B cell (primary cell): ENCODE measurements at regions of chr15 and their contacts with region 1.

Region 1: GRCh38 chr15:40754883-40755811 is at the start of gene RMDN3:
- DNase-seq: peak; percentile 96
- ATAC-seq: peak; percentile 98
- H3K4me3 ChIP-seq: peak within 1 kb of the TSS; percentile 66 to 100 (median 94)
- H3K4me3 Mint-ChIP-seq: peak within 1 kb of the TSS; percentile 93
- H3K27ac ChIP-seq: peak within 1 kb of the TSS; percentile 73 to 89
- H3K27ac Mint-ChIP-seq: peak within 1 kb of the TSS; percentile 93
- H3K4me1 ChIP-seq: peaks cover 8 to 19% of the 10 kb centered on the region in 2 donors
- H3K4me1 Mint-ChIP-seq: peaks cover 23% of the 10 kb centered on the region
- H3K27me3 ChIP-seq: no peaks in the 10 kb centered on the region
- H3K27me3 Mint-ChIP-seq: no peaks in the 10 kb centered on the region
- CTCF ChIP-seq: no peak
- total RNA-seq, gene RMDN3: 22.1 and 24.2 TPM in 2 replicates

Region 2: DNA sequence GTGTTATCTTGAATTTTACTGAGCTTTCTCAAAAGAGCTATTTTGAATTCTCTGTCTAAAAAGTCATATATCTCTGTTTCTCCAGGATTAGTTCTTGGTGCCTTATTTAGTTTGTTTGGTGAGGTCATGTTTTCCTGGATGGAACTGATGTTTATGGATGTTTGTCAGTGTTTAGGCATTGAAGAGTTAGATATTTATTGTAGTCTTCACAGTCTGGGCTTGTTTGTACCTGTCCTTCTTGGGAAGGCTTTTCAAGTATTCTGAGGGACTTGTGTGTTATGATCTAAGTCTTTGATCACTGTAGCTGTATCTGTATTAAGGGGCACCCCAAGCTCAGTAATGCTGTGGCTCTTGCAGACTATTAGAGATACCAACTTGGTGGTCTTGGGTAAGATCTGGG is 70.8 kb before region 1 on chr15:
- CTCF ChIA-PET with region 1: no interaction called
- POLR2A ChIA-PET with region 1: no interaction called
- intact Hi-C with region 1: loop called (anchors 1 kb)
- DNase-seq: no peak
- ATAC-seq: no peak
- H3K4me3 ChIP-seq: no peak overlapping the region
- H3K4me3 Mint-ChIP-seq: no peak overlapping the region
- H3K27ac ChIP-seq: no peak overlapping the region
- H3K27ac Mint-ChIP-seq: peak overlapping the region; percentile 41
- H3K4me1 ChIP-seq: peaks cover 11 to 15% of the 10 kb centered on the region in 2 donors
- H3K4me1 Mint-ChIP-seq: peaks cover 12% of the 10 kb centered on the region
- H3K27me3 ChIP-seq: no peaks in the 10 kb centered on the region
- H3K27me3 Mint-ChIP-seq: no peaks in the 10 kb centered on the region
- CTCF ChIP-seq: no peak

Region 3: DNA sequence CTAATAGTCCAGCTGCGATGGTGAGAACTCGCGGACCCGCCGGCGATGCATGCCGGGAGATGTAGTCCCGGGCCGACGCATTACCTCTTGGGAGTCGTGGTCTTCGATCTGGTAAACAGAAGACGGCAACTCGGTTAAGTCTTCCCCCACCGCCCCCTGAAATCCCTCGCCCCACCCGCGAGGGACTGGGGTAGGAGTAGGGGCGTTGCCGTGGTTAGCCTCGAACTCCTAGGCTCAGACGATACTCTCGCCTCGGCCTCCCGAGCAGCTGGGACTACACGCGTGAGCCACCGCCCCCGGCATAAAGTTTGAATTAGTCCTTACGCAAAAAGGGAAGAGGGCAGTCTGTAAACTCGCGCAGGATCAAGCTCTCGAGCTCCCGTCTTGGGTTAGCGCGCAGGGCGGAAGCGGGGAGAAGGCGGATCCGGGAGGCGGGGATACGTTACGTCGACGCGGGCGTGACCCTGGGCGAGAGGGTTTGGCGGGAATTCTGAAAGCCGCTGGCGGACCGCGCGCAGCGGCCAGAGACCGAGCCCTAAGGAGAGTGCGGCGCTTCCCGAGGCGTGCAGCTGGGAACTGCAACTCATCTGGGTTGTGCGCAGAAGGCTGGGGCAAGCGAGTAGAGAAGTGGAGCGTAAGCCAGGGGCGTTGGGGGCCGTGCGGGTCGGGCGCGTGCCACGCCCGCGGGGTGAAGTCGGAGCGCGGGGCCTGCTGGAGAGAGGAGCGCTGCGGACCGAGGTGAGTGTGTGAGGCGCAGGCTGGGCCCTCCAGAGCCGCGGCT is 60.3 kb before region 1 on chr15 and contains the start of gene RAD51:
- CTCF ChIA-PET with region 1: interaction called, 3 read pairs
- POLR2A ChIA-PET with region 1: interaction called, 4 read pairs
- intact Hi-C with region 1: loop called (anchors 1 kb)
- DNase-seq: peak; percentile 96
- ATAC-seq: peak; percentile 88
- H3K4me3 ChIP-seq: peak within 1 kb of the TSS; percentile 84 to 100 (median 87)
- H3K4me3 Mint-ChIP-seq: peak within 1 kb of the TSS; percentile 100
- H3K27ac ChIP-seq: peak within 1 kb of the TSS; percentile 93 to 94
- H3K27ac Mint-ChIP-seq: peak within 1 kb of the TSS; percentile 99
- H3K4me1 ChIP-seq: peaks cover 7 to 18% of the 10 kb centered on the region in 2 donors
- H3K4me1 Mint-ChIP-seq: peaks cover 25% of the 10 kb centered on the region
- H3K27me3 ChIP-seq: no peaks in the 10 kb centered on the region
- H3K27me3 Mint-ChIP-seq: no peaks in the 10 kb centered on the region
- CTCF ChIP-seq: no peak
- total RNA-seq, gene RAD51: 1.9 and 2.0 TPM in 2 replicates

Region 4: GRCh38 chr15:40769274-40770146 is 14.4 kb after region 1 on chr15 and contains the start of gene C15orf62:
- CTCF ChIA-PET with region 1: interaction called, 12 read pairs
- POLR2A ChIA-PET with region 1: interaction called, 4 read pairs
- intact Hi-C with region 1: loop called (anchors 1 kb)
- DNase-seq: peak; percentile 85
- ATAC-seq: peak; percentile 82
- H3K4me3 ChIP-seq: peak within 1 kb of the TSS in 4 of 5 experiments; percentile 15 to 52 (median 38)
- H3K4me3 Mint-ChIP-seq: peak within 1 kb of the TSS; percentile 88
- H3K27ac ChIP-seq: peak within 1 kb of the TSS; percentile 42 to 78
- H3K27ac Mint-ChIP-seq: peak within 1 kb of the TSS; percentile 95
- H3K4me1 ChIP-seq: peaks cover 45 to 56% of the 10 kb centered on the region in 2 donors
- H3K4me1 Mint-ChIP-seq: peaks cover 51% of the 10 kb centered on the region
- H3K27me3 ChIP-seq: no peaks in the 10 kb centered on the region
- H3K27me3 Mint-ChIP-seq: no peaks in the 10 kb centered on the region
- CTCF ChIP-seq: no peak
- total RNA-seq, gene C15orf62: 8.6 and 9.5 TPM in 2 replicates

Region 5: DNA sequence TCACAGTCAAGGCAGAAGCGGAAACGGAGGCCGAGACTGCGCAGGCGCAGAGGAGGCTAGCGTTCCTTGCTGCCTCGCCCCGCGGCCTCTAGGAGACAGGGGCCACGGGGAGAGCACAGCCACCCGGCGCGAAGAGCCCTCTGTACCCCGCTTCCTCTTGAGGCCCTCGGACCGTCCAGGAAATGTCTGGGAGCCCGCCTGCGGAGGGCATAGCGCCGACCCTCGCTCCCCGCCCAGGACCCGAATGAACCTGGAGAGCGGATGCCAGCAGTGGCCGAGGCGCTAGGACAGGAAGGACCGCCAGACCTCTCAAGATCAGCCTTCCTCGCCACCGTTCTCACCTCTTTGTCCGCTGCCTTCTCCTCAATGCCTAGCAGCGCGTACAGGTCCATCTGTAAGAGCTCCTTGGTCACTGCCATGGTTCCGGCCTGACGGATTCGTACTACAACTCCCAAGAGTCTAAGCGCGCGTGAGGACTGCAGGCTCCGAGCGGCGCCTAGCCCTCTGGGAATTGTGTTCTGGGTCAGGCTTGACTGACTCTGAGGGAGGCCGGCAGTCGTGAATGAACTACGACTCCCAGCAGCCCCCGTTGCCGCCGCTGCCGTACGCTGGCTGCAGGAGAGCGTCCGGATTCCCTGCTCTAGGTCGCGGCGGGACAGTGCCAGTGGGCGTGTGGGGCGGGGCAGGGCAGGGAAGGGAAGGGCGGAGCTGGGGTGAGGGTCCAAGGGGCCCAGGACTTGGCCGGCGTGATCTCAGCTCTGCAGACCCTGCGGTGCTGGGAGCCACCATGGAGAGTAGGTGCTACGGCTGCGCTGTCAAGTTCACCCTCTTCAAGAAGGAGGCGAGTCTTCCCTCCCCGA is 52.1 kb after region 1 on chr15 and contains the starts of genes DNAJC17 and ZFYVE19:
- CTCF ChIA-PET with region 1: no interaction called
- POLR2A ChIA-PET with region 1: no interaction called
- intact Hi-C with region 1: loop called (anchors 1 kb)
- DNase-seq: peak; percentile 97
- ATAC-seq: peak; percentile 96
- H3K4me3 ChIP-seq: peak within 1 kb of the TSS; percentile 78 to 100 (median 100)
- H3K4me3 Mint-ChIP-seq: peak within 1 kb of the TSS; percentile 99
- H3K27ac ChIP-seq: peak within 1 kb of the TSS; percentile 86 to 95
- H3K27ac Mint-ChIP-seq: peak within 1 kb of the TSS; percentile 98
- H3K4me1 ChIP-seq: peaks cover 12 to 18% of the 10 kb centered on the region in 2 donors
- H3K4me1 Mint-ChIP-seq: peaks cover 24% of the 10 kb centered on the region
- H3K27me3 ChIP-seq: no peaks in the 10 kb centered on the region
- H3K27me3 Mint-ChIP-seq: no peaks in the 10 kb centered on the region
- CTCF ChIP-seq: peak; percentile 11
- total RNA-seq, gene DNAJC17: 46.1 and 52.3 TPM in 2 replicates
- total RNA-seq, gene ZFYVE19: 29.4 and 29.8 TPM in 2 replicates

Region 6: GRCh38 chr15:41269887-41270286 is 514.7 kb after region 1 on chr15:
- CTCF ChIA-PET with region 1: no interaction called
- POLR2A ChIA-PET with region 1: no interaction called
- intact Hi-C with region 1: no loop called
- DNase-seq: no peak
- ATAC-seq: no peak
- H3K4me3 ChIP-seq: no peak overlapping the region
- H3K4me3 Mint-ChIP-seq: no peak overlapping the region
- H3K27ac ChIP-seq: no peak overlapping the region
- H3K27ac Mint-ChIP-seq: no peak overlapping the region
- H3K4me1 ChIP-seq: no peaks in the 10 kb centered on the region
- H3K4me1 Mint-ChIP-seq: no peaks in the 10 kb centered on the region
- H3K27me3 ChIP-seq: no peaks in the 10 kb centered on the region
- H3K27me3 Mint-ChIP-seq: no peaks in the 10 kb centered on the region
- CTCF ChIP-seq: no peak

Region 7: GRCh38 chr15:41283653-41284426 is 528.7 kb after region 1 on chr15:
- CTCF ChIA-PET with region 1: no interaction called
- POLR2A ChIA-PET with region 1: no interaction called
- intact Hi-C with region 1: loop called (anchors 2 kb)
- DNase-seq: peak; percentile 99
- ATAC-seq: peak; percentile 98
- H3K4me3 ChIP-seq: peak overlapping the region; percentile 86 to 97 (median 94)
- H3K4me3 Mint-ChIP-seq: peak overlapping the region; percentile 95
- H3K27ac ChIP-seq: peak overlapping the region; percentile 86 to 90
- H3K27ac Mint-ChIP-seq: peak overlapping the region; percentile 97
- H3K4me1 ChIP-seq: peaks cover 16 to 33% of the 10 kb centered on the region in 2 donors
- H3K4me1 Mint-ChIP-seq: peaks cover 42% of the 10 kb centered on the region
- H3K27me3 ChIP-seq: no peaks in the 10 kb centered on the region
- H3K27me3 Mint-ChIP-seq: no peaks in the 10 kb centered on the region
- CTCF ChIP-seq: no peak

Region 8: DNA sequence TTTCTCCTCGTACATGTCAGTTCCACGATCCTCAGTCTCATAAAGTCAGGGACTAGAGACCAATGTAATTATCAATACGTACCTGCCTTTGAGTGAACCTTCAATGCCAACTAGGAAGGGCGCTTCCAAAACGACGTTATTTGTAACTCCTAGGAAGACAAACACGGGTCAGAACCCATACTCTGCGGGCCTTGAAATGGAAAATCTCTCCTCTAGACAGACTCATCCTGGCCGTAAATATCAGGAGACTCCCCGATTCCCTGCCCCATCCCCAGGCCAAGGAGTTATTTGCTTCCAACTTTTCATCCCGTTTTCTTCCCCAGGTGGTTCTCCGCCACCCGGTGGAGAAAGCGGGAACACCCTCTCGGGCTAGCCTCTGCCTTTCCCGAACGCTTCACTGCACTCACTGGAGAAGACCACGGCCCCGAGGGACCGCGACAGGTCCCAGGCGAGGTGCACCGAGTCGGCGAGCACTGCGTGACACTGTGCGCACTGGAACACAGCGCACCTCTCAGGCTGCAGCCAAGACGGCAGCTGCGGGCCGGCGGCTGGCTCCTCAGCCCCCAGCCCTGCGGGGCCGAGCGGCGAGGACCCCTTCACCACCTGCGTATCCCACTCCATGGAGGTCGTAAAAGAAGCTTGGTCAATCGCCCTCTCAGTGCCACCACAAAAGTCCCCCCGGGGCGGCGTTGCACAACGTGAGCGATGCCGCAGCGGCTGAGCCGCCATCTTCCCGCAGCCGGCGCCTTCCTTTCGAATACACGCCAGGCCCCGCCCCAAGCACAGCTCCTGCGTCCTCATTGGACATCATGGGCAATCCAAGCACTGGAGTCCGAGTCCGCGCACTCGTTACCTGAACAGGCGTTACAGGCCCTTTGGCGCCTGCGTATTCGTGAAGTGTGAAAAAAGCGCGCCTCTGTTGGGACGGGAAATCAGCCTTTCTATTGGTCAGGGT is 577.0 kb after region 1 on chr15 and contains the start of gene OIP5:
- CTCF ChIA-PET with region 1: no interaction called
- POLR2A ChIA-PET with region 1: no interaction called
- intact Hi-C with region 1: loop called (anchors 2 kb)
- DNase-seq: peak; percentile 98
- ATAC-seq: peak; percentile 94
- H3K4me3 ChIP-seq: peak within 1 kb of the TSS; percentile 84 to 98 (median 89)
- H3K4me3 Mint-ChIP-seq: peak within 1 kb of the TSS; percentile 99
- H3K27ac ChIP-seq: peak within 1 kb of the TSS; percentile 45 to 76
- H3K27ac Mint-ChIP-seq: peak within 1 kb of the TSS; percentile 95
- H3K4me1 ChIP-seq: peaks cover 13 to 19% of the 10 kb centered on the region in 2 donors
- H3K4me1 Mint-ChIP-seq: peaks cover 27% of the 10 kb centered on the region
- H3K27me3 ChIP-seq: no peaks in the 10 kb centered on the region
- H3K27me3 Mint-ChIP-seq: no peaks in the 10 kb centered on the region
- CTCF ChIP-seq: peak; percentile 57
- total RNA-seq, gene OIP5: 0.84 and 2.3 TPM in 2 replicates